Right ventricle myocardium superior (tissue), 1 donor: ENCODE measurements at regions of chr19 and their contacts with region 1.

Region 1: DNA sequence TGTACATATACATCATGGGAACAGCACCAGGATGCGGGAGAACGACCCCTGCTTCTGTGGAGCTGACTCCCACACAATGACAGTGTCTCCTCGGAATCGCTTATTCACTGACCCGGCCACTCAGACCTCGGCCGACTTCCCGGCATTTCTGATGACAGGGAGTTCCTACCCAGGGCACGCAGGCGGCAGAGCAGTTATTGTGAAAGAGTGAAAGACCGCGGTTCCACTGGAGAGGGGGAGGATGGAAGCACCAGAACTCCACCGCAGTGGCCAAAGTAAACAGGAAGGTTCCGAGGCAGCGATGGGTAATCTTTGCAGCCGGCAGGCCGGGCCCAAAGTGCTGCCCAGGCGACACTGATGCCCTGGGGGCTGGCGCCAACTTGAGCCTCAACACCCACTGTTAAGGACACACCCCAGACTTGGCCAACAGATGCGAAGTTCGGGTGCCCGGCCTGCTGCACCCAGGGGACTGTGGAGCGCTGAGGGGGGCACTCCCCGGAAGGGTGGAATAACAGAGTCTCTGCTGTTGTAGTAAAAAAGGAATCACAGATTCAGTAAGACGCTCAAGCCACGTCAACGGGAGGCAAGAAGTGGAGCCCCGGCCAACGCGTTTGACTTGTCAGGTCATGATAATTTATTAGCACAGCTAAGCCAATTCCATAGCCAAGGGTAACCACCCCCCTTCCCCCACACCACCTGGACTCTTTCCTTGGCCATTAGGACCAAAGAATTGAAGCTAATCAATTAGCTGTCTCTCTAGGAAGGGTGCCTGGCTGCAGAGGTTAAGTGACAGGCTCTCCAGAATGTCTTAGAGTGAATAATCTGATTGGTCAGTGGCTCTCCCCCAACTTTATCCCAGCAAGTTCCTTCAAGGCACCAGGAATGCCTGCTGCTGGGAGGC is 5.8 kb downstream of the MLLT1 start:
- DNase-seq: peak; percentile 91
- ATAC-seq: peak; percentile 81

Region 2: DNA sequence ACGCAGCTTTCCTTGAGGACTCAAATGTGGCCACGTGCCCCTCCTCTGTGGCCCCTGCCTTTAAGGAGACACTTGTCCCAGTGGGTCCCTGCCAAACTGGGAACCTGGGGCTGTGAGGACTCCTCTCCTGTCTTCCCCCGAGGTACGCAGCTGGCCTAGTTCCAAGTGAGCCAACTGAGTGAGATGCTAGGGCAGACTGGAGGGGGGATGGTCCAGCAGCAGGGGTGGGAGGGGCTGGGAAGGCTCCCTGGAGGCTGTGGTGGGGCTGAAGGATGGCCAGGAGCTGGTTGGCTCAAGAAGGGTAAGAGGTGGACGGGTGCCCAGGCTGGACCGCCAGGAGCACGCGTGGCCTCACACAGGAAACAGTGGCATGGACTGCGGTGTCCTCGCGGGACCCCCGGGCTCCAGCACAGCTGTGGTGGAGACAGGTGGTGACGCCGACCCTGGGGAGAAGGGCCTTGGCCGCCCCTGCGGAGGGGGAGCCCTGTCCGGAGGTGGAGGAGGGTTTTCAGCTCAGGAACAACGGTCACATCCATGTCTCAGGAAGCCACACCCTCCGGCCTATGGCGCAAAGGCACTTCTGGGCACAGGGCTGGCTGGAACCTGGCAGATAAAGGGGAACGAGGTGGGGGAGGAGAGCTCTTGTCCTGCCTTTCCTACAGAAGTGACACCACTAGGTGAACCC is 40.0 kb before region 1 on chr19:
- intact Hi-C with region 1: loop called (anchors 5 kb)
- DNase-seq: peak; percentile 83
- ATAC-seq: peak; percentile 69